Activated CD4-positive, alpha-beta memory T cell treated with anti-CD3 and anti-CD28 coated beads, Interleukin-2, amount 10 ng/mL, durations not matched to agents 7 days and 5 days (primary cell): ENCODE measurements at regions of chr17 and their contacts with region 1.

Region 1: GRCh38 chr17:80364216-80364618 is 50.8 kb upstream of the ENDOV start:
- DNase-seq: no peak
- H3K4me3 Mint-ChIP-seq: no peak overlapping the region
- H3K27ac Mint-ChIP-seq: no peak overlapping the region
- H3K4me1 Mint-ChIP-seq: no peaks in the 10 kb centered on the region
- H3K27me3 Mint-ChIP-seq: no peaks in the 10 kb centered on the region

Region 2: DNA sequence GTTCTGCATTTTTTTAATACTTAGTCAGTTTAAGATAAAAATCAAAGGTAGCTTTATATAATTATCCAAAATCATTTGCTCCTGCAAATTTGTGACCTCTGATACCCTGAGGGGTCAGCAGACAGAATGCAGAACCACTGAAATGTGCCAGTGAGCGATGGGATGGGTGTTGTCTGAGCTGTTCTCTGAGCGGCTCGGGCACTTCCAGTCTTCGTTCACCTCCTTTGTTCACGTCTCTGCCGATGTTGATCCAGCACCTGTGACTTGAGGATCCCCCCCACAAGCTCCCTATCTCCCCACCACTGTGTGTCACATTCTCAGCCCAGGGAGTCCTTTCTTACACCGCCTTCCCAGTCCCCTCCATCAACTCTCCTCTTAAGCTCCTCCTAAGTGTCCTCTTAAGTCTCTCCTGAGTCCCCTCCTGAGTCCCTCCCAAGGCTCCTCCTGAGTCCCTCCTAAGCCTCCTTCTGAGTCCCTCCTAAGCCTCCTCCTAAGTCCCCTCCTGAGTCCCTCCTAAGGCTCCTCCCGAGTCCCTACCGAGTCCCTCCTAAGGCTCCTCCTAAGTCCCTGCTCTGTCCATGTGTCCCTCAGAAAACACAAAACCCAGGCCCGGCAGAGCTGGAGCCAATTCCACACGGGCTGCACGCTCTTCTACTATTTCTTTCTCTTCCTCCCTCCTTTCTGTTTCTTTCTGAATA is 56.1 kb before region 1 on chr17:
- CTCF ChIA-PET with region 1: no interaction called
- POLR2A ChIA-PET with region 1: no interaction called
- DNase-seq: no peak
- H3K4me3 Mint-ChIP-seq: no peak overlapping the region
- H3K27ac Mint-ChIP-seq: peak overlapping the region; percentile 21
- H3K4me1 Mint-ChIP-seq: peaks cover 25% of the 10 kb centered on the region
- H3K27me3 Mint-ChIP-seq: no peaks in the 10 kb centered on the region

Region 3: GRCh38 chr17:80349151-80349651 is 15.0 kb before region 1 on chr17:
- CTCF ChIA-PET with region 1: interaction called, 4 read pairs
- POLR2A ChIA-PET with region 1: interaction called, 19 read pairs
- DNase-seq: no peak
- H3K4me3 Mint-ChIP-seq: no peak overlapping the region
- H3K27ac Mint-ChIP-seq: peak overlapping the region; percentile 22
- H3K4me1 Mint-ChIP-seq: peaks cover 24% of the 10 kb centered on the region
- H3K27me3 Mint-ChIP-seq: no peaks in the 10 kb centered on the region

Region 4: DNA sequence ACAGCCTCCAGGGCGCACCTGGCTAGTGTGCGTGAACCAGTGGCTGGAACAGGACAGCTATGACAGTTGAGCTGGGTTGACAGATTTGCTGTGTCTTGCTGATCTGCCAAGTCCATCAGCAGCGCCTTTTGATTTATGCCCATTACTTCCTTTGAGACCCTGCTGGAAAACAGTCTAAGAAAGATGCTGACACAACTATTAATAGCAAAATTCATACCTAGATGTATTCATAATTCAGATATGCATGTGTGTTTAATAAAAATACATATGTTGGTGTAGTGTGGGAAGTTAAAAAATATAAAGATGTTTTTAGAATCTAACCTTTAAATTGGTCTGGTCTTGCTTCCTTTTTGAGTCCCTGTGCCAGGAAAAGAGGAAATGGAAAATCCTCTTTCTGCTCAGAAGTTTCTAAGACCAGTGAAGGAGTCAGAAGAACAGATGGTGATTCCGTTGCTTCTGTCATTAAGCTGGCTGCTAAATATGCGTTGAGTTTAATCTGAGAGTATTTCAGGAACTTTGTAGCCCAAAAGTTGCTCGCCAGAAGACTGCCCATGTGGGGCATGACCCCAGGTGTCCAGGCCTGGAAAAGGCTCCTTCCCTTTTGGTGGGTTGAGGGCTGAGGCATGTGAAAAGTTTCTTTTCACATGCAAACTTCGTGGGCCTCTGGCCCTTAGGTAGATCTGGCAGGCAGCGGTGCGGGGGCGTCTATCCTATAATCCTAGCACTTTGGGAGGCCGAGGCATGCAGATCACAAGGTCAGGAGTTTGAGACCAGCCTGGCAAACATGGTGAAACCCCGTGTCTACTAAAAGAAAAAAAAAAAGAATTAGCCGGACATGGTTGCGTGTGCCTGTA is 10.7 kb after region 1 on chr17:
- CTCF ChIA-PET with region 1: no interaction called
- POLR2A ChIA-PET with region 1: interaction called, 12 read pairs
- DNase-seq: no peak
- H3K4me3 Mint-ChIP-seq: no peak overlapping the region
- H3K27ac Mint-ChIP-seq: no peak overlapping the region
- H3K4me1 Mint-ChIP-seq: peaks cover 2% of the 10 kb centered on the region
- H3K27me3 Mint-ChIP-seq: no peaks in the 10 kb centered on the region

Region 5: DNA sequence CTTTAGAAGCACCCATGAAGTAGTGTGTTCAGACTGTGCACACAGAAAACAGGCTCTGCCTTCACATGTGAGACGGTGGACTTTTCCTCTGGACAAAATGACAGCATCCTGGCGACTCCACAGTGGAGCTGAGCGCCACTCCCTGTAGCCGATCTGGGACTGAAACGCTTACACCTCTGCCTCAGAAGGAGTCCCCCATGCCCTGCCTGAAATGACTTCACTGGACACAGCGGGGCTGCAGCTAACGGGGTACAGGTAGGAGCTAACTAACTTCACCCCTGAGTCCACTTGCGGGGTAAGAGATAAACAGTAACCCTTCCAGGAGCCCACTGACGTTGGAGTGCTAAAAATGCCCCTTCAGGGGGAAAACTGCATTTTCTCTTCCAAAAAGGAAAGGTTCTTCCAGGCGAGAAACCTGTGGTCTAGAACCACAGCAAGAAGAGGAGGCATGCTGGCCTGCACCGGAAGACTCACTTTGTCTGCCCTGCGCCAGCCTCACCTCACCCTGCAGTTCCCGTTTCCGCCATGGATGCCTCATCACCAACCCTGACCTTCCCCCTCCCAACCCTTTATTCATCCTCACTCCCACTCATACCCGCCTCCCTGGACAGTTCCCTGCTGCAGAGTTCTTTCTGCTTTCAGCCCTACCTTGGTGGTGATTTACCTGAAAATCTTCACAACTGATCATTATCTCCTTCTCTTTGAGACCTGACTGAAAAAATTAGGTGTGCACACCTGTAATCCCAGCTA is 31.4 kb after region 1 on chr17:
- CTCF ChIA-PET with region 1: no interaction called
- POLR2A ChIA-PET with region 1: no interaction called
- DNase-seq: no peak
- H3K4me3 Mint-ChIP-seq: no peak overlapping the region
- H3K27ac Mint-ChIP-seq: no peak overlapping the region
- H3K4me1 Mint-ChIP-seq: peaks cover 20% of the 10 kb centered on the region
- H3K27me3 Mint-ChIP-seq: no peaks in the 10 kb centered on the region

Region 6: GRCh38 chr17:80441133-80441578 is 76.9 kb after region 1 on chr17:
- CTCF ChIA-PET with region 1: no interaction called
- POLR2A ChIA-PET with region 1: no interaction called
- DNase-seq: peak; percentile 66
- H3K4me3 Mint-ChIP-seq: no peak overlapping the region
- H3K27ac Mint-ChIP-seq: no peak overlapping the region
- H3K4me1 Mint-ChIP-seq: no peaks in the 10 kb centered on the region
- H3K27me3 Mint-ChIP-seq: peaks cover 3% of the 10 kb centered on the region